GM12878 (cell line): ENCODE measurements at regions of chr3 and their contacts with region 1.

Region 1: GRCh38 chr3:182713743-182714517 is 79.4 kb upstream of the ATP11B start:
- DNase-seq: peak; percentile 49
- ATAC-seq: peak; percentile 48
- H3K4me3 ChIP-seq: no peak overlapping the region
- H3K27ac ChIP-seq: no peak overlapping the region; the same call in 1 of the 2 replicates
- H3K4me1 ChIP-seq: peaks cover 35% of the 10 kb centered on the region
- H3K27me3 ChIP-seq: no peaks in the 10 kb centered on the region
- CTCF ChIP-seq: peak; percentile 51 to 81 (median 64); a peak in 5 of 6 replicates
- EP300 ChIP-seq: no peak
- POLR2A ChIP-seq: no peak
- RAD21 ChIP-seq: peak; percentile 89

Region 2: DNA sequence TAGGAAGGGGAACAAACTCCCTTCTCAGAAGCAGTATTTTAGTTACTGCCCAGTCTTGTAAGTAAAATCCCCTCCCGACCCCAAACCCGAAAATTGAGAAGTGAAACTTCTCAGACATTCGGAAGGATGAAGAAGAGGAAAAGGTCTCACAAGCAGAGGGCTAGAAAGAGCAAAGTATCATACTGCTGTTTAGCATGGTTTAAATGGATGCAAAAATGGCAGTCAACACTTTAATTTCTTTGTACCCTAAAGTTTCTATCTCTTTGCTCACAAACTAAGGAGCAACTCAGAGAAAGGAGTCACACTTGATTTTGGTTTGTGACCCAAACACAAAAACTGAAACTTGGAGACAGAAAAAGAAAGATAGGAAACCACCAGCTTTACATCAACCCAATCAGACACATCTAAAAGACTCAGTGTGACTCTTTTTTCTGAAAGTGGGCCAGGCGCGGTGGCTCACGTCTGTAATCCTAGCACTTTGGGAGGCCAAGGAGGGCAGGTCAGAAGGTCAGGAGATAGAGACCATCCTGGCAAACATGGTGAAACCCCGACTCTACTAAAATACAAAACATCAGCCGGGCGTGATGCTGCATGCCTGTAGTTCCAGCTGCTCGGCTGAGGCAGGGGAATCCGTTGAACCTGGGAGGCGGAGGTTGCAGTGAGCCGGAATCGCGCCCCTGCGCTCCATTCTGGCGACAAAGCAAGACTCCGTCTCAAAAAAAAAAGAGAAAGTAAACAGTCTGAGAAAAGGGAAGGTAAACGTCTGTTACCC is 16.2 kb after region 1 on chr3:
- CTCF ChIA-PET with region 1: interaction called, 109 read pairs
- POLR2A ChIA-PET with region 1: interaction called, 27 read pairs
- RAD21 ChIA-PET with region 1: interaction called, 104 read pairs
- SMC1A ChIA-PET with region 1: interaction called, 109 read pairs
- in situ Hi-C with region 1: no loop called
- intact Hi-C with region 1: loop called (anchors 1 kb)
- DNase-seq: peak; percentile 68
- ATAC-seq: peak; percentile 86
- H3K4me3 ChIP-seq: peak overlapping the region; percentile 65
- H3K27ac ChIP-seq: peak overlapping the region; percentile 90
- H3K4me1 ChIP-seq: peaks cover 8% of the 10 kb centered on the region
- H3K27me3 ChIP-seq: no peaks in the 10 kb centered on the region
- CTCF ChIP-seq: no peak
- EP300 ChIP-seq: peak; percentile 26 to 51; a peak in 1 of 4 replicates
- POLR2A ChIP-seq: no peak
- RAD21 ChIP-seq: 0 out of 2 replicates have a peak, but pooled peaks have one; percentile 10

Region 3: GRCh38 chr3:182802413-182803390 is 88.8 kb after region 1 on chr3:
- CTCF ChIA-PET with region 1: interaction called, 10 read pairs
- POLR2A ChIA-PET with region 1: no interaction called
- RAD21 ChIA-PET with region 1: interaction called, 89 read pairs
- SMC1A ChIA-PET with region 1: interaction called, 11 read pairs
- in situ Hi-C with region 1: no loop called
- intact Hi-C with region 1: no loop called
- DNase-seq: no peak
- ATAC-seq: peak; percentile 40
- H3K4me3 ChIP-seq: no peak overlapping the region
- H3K27ac ChIP-seq: no peak overlapping the region
- H3K4me1 ChIP-seq: no peaks in the 10 kb centered on the region; the same call in 1 of the 2 replicates
- H3K27me3 ChIP-seq: no peaks in the 10 kb centered on the region
- CTCF ChIP-seq: no peak
- EP300 ChIP-seq: no peak
- POLR2A ChIP-seq: no peak
- RAD21 ChIP-seq: no peak

Region 4: DNA sequence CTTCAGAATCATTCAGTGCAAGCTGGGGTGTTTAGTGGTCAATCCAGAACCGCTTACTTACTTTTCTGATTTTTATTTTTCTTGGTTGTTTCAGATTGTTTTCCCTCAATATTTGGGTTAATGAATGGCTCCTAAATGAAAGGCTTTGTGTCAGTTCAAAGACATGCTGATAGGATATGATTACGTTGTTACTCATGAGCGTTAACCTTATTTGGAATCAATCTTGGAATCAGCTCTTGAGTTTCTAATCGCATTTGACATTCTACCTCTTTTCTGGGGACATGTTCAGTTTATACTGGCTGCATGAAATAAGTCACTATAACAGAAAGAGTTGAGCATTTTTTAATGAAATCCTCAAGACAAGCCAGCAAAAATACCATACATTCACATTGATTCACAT is 129.5 kb after region 1 on chr3:
- CTCF ChIA-PET with region 1: interaction called, 76 read pairs
- POLR2A ChIA-PET with region 1: no interaction called
- RAD21 ChIA-PET with region 1: interaction called, 9 read pairs
- SMC1A ChIA-PET with region 1: interaction called, 48 read pairs
- in situ Hi-C with region 1: loop called (anchors 5 kb)
- intact Hi-C with region 1: no loop called
- DNase-seq: no peak
- ATAC-seq: no peak
- H3K4me3 ChIP-seq: no peak overlapping the region
- H3K27ac ChIP-seq: no peak overlapping the region
- H3K4me1 ChIP-seq: no peaks in the 10 kb centered on the region
- H3K27me3 ChIP-seq: no peaks in the 10 kb centered on the region
- CTCF ChIP-seq: no peak
- EP300 ChIP-seq: no peak
- POLR2A ChIP-seq: no peak
- RAD21 ChIP-seq: no peak

Region 5: DNA sequence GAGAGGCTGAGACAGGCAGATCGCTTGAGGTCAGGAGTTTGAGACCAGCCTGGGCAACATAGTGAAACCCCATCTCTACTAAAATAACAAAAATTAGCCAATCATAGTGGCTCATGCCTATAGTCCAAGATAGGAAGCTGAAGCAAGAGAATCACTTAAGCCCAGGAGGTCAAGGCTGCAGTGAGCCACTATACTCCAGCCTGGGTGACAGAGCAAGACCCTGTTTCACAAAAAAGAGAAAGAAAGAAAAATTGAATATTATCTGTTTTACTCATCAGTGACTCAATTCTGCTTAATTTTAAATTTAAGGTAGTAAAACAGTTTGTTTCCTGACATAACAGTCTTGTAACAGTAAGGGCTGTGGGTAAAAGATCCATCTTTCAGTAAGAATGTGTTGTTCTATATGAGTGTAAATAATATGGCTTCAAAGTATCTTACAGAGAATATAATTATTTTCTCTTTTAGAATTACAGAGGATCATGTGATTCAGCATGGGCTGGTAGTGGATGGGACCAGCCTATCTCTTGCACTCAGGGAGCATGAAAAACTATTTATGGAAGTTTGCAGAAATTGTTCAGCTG is 165.2 kb after region 1 on chr3:
- CTCF ChIA-PET with region 1: interaction called, 7 read pairs
- POLR2A ChIA-PET with region 1: no interaction called
- RAD21 ChIA-PET with region 1: interaction called, 3 read pairs
- SMC1A ChIA-PET with region 1: interaction called, 13 read pairs
- in situ Hi-C with region 1: no loop called
- intact Hi-C with region 1: no loop called
- DNase-seq: no peak
- ATAC-seq: no peak
- H3K4me3 ChIP-seq: no peak overlapping the region
- H3K27ac ChIP-seq: no peak overlapping the region
- H3K4me1 ChIP-seq: no peaks in the 10 kb centered on the region
- H3K27me3 ChIP-seq: no peaks in the 10 kb centered on the region
- CTCF ChIP-seq: no peak
- EP300 ChIP-seq: no peak
- POLR2A ChIP-seq: no peak
- RAD21 ChIP-seq: no peak

Region 6: GRCh38 chr3:183044547-183045229 is 330.8 kb after region 1 on chr3:
- CTCF ChIA-PET with region 1: interaction called, 18 read pairs
- POLR2A ChIA-PET with region 1: no interaction called
- RAD21 ChIA-PET with region 1: interaction called, 3 read pairs
- SMC1A ChIA-PET with region 1: interaction called, 4 read pairs
- in situ Hi-C with region 1: no loop called
- intact Hi-C with region 1: loop called (anchors 10 kb)
- DNase-seq: peak; percentile 90
- ATAC-seq: peak; percentile 95
- H3K4me3 ChIP-seq: no peak overlapping the region
- H3K27ac ChIP-seq: peak overlapping the region; percentile 2; the same call in 1 of the 2 replicates
- H3K4me1 ChIP-seq: peaks cover 44% of the 10 kb centered on the region
- H3K27me3 ChIP-seq: no peaks in the 10 kb centered on the region
- CTCF ChIP-seq: no peak
- EP300 ChIP-seq: peak; percentile 83 to 85
- POLR2A ChIP-seq: no peak
- RAD21 ChIP-seq: 0 out of 2 replicates have a peak, but pooled peaks have one; percentile 11

Region 7: GRCh38 chr3:183188895-183189462 is 475.0 kb after region 1 on chr3:
- CTCF ChIA-PET with region 1: interaction called, 26 read pairs
- POLR2A ChIA-PET with region 1: no interaction called
- RAD21 ChIA-PET with region 1: interaction called, 21 read pairs
- SMC1A ChIA-PET with region 1: interaction called, 4 read pairs
- in situ Hi-C with region 1: no loop called
- intact Hi-C with region 1: no loop called
- DNase-seq: no peak
- ATAC-seq: peak; percentile 88
- H3K4me3 ChIP-seq: no peak overlapping the region
- H3K27ac ChIP-seq: no peak overlapping the region
- H3K4me1 ChIP-seq: peaks cover 2% of the 10 kb centered on the region; the same call in 1 of the 2 replicates
- H3K27me3 ChIP-seq: no peaks in the 10 kb centered on the region
- CTCF ChIP-seq: peak; percentile 49 to 60 (median 57); a peak in 5 of 6 replicates
- EP300 ChIP-seq: no peak
- POLR2A ChIP-seq: no peak
- RAD21 ChIP-seq: peak; percentile 61